ENCODE measurements at regions of chr17 and their contacts with region 1.

Region 1: DNA sequence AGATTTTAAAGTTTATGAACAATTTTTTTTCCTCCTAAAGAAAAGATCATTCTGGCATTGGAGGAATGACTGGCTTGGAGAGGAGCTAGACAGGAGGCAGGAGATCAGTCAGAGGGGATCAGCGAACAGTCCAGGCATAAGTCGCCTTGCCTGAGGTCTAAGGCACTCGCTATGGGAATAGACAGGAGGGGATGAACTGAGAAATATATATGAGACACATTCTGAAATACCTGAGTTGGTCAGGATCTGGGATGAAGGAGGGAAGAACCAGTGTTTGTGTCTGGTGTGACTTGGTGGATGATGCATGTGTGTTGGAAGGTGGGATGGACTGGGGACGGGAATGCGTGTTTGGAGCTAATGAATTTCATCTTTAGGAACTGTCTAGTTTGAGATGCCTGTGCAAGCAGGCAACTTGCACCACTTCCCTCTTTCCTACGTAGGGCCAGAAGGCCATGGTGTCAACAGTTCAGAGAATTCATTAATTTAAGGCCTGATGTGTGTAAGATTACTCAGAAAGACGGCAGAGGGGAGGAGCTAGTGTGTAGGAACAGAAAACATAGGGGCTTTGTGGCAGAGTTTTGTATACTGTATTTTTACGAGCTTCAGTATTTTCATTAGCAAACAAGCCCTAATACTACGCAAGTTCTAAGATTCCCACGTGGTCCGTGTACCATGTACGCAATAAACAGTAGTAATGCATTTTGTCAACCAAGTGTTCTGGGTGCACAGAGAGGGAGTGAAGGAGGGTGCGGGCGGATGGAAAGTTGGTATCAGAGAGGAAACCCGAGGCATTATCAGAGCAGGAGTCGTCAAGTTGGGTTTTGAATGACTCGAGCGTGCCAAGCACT is 825 bp downstream of the HEATR6 start:
- DNase-seq: no peak
- ATAC-seq: peak; percentile 12 to 29; a peak in 5 of 6 replicates
- H3K4me3 ChIP-seq: peak overlapping the region; percentile 61
- H3K27ac ChIP-seq: peak overlapping the region; percentile 90
- H3K4me1 ChIP-seq: peaks cover 42% of the 10 kb centered on the region
- CTCF ChIP-seq: no peak
- EP300 ChIP-seq: no peak
- POLR2A ChIP-seq: no peak
- RAD21 ChIP-seq: no peak

Region 2: GRCh38 chr17:60036796-60037612 is 40.9 kb before region 1 on chr17:
- CTCF ChIA-PET with region 1: interaction called, 11 read pairs
- POLR2A ChIA-PET with region 1: interaction called, 4 read pairs
- DNase-seq: peak; percentile 81 to 84
- ATAC-seq: peak; percentile 87 to 94
- H3K4me3 ChIP-seq: no peak overlapping the region
- H3K27ac ChIP-seq: peak overlapping the region; percentile 11 to 59; a peak in 5 of 6 replicates
- H3K4me1 ChIP-seq: peaks cover 5% of the 10 kb centered on the region
- CTCF ChIP-seq: peak; percentile 96
- EP300 ChIP-seq: no peak
- POLR2A ChIP-seq: no peak
- RAD21 ChIP-seq: peak; percentile 66 to 69

Region 3: DNA sequence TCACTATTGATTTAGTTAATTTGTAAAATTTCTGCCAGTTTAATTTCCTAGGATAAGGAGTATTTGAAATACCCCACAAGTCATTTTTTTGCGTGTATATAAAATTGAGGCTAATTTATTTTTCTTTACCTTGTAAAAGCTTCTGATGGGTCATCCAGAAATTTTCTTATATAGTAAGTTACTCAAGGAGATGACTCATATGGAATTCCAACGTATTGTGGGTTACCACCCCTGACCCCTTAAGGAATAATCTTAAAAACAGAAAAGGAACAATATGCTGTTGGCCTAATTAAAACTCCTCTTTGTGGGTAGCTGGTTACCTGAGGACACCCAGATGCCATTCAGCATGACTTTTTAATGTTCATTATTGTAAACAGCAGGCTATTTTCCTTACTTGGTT is 12.8 kb before region 1 on chr17:
- CTCF ChIA-PET with region 1: interaction called, 10 read pairs
- POLR2A ChIA-PET with region 1: interaction called, 3 read pairs
- DNase-seq: no peak
- ATAC-seq: no peak
- H3K4me3 ChIP-seq: no peak overlapping the region
- H3K27ac ChIP-seq: no peak overlapping the region
- H3K4me1 ChIP-seq: no peaks in the 10 kb centered on the region
- CTCF ChIP-seq: no peak
- EP300 ChIP-seq: no peak
- POLR2A ChIP-seq: no peak
- RAD21 ChIP-seq: no peak